Heart left ventricle (tissue), 16 donors: ENCODE measurements at regions of chr11 and their contacts with region 1.

Region 1: GRCh38 chr11:36605221-36606216 is 7.5 kb upstream of the RAG2 start:
- DNase-seq: no peak
- ATAC-seq: no peak
- H3K4me3 ChIP-seq: no peak overlapping the region
- H3K27ac ChIP-seq: no peak overlapping the region
- H3K4me1 ChIP-seq: peaks cover 0 to 4% (median 0%) of the 10 kb centered on the region in 12 donors
- H3K27me3 ChIP-seq: no peaks in the 10 kb centered on the region
- CTCF ChIP-seq: no peak
- POLR2A ChIP-seq: no peak

Region 2: DNA sequence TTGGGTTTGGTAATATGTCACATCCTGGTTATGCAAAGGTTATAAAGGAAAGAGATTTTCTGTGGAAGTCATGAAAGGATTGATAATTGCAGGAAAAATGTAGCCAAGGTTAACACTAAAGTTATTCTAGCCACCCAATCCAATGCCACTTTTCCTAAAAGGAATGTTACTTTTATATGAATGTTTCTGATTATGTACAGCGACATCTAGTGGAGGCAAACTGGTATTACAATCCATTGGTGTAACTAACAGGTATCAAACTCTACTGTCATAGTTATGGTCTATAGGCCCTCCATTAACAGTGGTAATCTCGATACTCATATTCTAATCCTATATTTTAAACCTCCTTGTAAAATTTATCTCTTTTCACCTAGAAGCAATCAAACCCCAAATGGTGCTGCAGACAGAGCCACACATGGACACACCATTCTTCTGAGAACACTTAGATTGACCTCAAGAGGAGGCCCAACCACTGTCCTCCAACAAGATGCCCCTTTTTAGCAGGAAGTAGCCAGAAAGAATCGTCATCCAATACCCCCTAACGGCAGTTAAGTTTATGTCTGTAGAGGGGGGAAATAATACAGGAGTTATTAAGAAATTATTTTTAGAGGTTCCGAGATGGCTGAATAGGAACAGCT is 67.4 kb after region 1 on chr11:
- intact Hi-C with region 1: loop called in 1 of 10 experiments (anchors 10 kb)
- DNase-seq: no peak
- ATAC-seq: no peak
- H3K4me3 ChIP-seq: no peak overlapping the region
- H3K27ac ChIP-seq: no peak overlapping the region
- H3K4me1 ChIP-seq: no peaks in the 10 kb centered on the region
- H3K27me3 ChIP-seq: no peaks in the 10 kb centered on the region
- CTCF ChIP-seq: peak; percentile 77 to 97 (median 87)
- POLR2A ChIP-seq: no peak